Kidney (tissue), 22 donors: ENCODE measurements at regions of chr10 and their contacts with region 1.

Region 1: GRCh38 chr10:98041372-98042043 is 11.1 kb upstream of the CRTAC1 start:
- DNase-seq: peak in 4 of 5 donors; percentile 53 to 79 (median 77)
- H3K4me3 ChIP-seq: no peak overlapping the region
- H3K27ac ChIP-seq: no peak overlapping the region
- H3K4me1 ChIP-seq: no peaks in the 10 kb centered on the region
- H3K27me3 ChIP-seq: peaks cover 4% of the 10 kb centered on the region
- CTCF ChIP-seq: peak; percentile 64

Region 2: GRCh38 chr10:97914837-97915211 is 126.7 kb before region 1 on chr10:
- intact Hi-C with region 1: loop called (anchors 5 kb)
- DNase-seq: peak; percentile 81 to 91 (median 83)
- H3K4me3 ChIP-seq: no peak overlapping the region
- H3K27ac ChIP-seq: no peak overlapping the region
- H3K4me1 ChIP-seq: no peaks in the 10 kb centered on the region
- H3K27me3 ChIP-seq: no peaks in the 10 kb centered on the region
- CTCF ChIP-seq: peak; percentile 84